ENCODE measurements at regions of chr15 and their contacts with region 1.

Region 1: DNA sequence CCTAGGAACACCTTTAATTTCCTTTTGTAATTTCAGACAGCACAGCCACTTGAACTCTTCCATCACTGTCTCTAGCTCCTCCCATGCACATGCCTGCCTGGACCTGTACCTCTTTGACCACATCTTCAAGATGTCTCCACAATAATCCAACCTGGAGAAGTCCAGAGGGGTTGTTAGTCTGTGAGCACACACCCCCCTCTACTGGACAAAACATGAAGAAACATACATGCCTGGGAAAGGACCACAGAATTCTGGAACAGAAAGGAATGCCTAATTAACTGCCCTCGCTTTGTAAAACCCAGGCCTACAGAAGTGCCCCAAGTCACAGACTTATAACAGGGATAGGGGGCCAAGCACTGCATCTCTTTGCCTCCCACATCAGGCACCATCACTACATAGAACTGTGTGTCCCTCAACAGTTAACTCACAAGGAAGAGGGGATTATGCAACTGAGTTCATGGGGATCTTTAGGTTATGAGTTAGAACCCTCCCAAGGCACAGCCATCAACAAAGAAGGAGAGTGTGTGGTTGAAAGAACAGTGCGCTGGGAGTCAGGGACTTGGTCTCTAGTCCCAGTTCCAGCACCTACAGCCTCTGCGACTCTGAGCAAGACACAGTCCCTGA is 61.7 kb downstream of the FMN1 start:
- DNase-seq: peak; percentile 61
- H3K4me3 ChIP-seq: no peak overlapping the region
- H3K27ac ChIP-seq: no peak overlapping the region
- H3K27me3 ChIP-seq: no peaks in the 10 kb centered on the region
- CTCF ChIP-seq: peak; percentile 89

Region 2: DNA sequence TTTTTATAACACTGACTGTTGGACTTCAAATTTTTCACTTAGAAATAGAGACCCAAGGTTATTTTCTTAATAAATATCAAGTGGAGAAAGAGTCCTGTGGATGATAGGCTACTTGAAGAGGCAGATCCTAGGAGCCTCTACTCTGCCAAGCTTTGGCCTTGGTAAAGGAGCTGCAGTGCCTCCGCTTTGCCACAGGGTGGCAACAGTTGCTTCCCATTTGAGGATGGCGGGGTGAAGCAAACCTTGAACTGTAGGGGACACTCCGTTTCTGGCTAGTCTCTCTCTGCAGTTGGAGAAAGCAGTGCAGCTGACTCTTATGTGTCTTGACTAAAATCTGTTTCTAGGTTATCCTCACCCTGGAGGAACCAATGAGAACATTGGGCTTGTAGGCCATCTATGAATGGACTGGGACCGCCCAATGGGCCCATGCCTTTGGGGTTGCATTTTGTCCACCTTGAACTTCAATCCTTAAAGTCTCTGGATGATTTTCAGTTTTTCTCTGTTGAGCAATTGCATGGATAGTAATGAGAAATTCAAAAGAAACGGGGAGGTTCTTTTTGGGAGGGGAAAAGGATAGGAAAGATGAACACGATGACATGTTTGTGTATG is 481.5 kb before region 1 on chr15:
- CTCF ChIA-PET with region 1: interaction called, 39 read pairs
- POLR2A ChIA-PET with region 1: no interaction called
- DNase-seq: peak; percentile 38
- H3K4me3 ChIP-seq: no peak overlapping the region
- H3K27ac ChIP-seq: no peak overlapping the region
- H3K27me3 ChIP-seq: no peaks in the 10 kb centered on the region
- CTCF ChIP-seq: peak; percentile 98

Region 3: GRCh38 chr15:32994810-32995424 is 137.9 kb before region 1 on chr15:
- CTCF ChIA-PET with region 1: interaction called, 25 read pairs
- POLR2A ChIA-PET with region 1: no interaction called
- DNase-seq: no peak
- H3K4me3 ChIP-seq: no peak overlapping the region
- H3K27ac ChIP-seq: no peak overlapping the region
- H3K27me3 ChIP-seq: no peaks in the 10 kb centered on the region
- CTCF ChIP-seq: peak; percentile 70

Region 4: DNA sequence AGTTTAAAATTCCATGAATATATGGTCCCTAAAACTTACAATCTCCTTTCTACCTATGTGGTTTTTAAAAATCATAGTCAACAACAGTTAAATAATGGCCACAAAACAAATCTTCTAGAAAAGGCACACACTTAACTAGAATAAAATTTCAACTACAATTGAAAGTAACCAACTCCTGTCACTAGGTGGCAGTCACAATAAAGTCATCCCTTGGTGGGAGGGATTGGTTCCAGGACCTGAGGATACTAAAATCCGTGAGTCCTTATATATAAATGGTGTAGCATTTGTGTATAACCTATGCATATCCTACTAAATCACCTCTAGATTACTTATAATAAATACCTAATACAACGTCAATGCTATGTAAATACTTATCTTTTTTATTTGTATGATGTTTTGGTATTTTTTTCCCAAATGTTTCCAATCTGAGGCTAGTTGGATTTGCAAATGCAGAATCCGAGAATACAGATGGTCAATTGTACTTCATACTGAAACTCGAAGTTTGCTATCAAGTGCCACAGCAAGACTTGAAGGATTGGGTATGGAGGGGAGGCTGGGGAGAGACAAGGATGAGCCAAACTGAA is 110.9 kb before region 1 on chr15:
- CTCF ChIA-PET with region 1: interaction called, 49 read pairs
- POLR2A ChIA-PET with region 1: no interaction called
- DNase-seq: peak; percentile 34
- H3K4me3 ChIP-seq: no peak overlapping the region
- H3K27ac ChIP-seq: peak overlapping the region; percentile 63
- H3K27me3 ChIP-seq: no peaks in the 10 kb centered on the region
- CTCF ChIP-seq: peak; percentile 66

Region 5: GRCh38 chr15:33080006-33080405 is 52.8 kb before region 1 on chr15:
- CTCF ChIA-PET with region 1: interaction called, 290 read pairs
- POLR2A ChIA-PET with region 1: no interaction called
- DNase-seq: no peak
- H3K4me3 ChIP-seq: no peak overlapping the region
- H3K27ac ChIP-seq: no peak overlapping the region
- H3K27me3 ChIP-seq: no peaks in the 10 kb centered on the region
- CTCF ChIP-seq: no peak

Region 6: DNA sequence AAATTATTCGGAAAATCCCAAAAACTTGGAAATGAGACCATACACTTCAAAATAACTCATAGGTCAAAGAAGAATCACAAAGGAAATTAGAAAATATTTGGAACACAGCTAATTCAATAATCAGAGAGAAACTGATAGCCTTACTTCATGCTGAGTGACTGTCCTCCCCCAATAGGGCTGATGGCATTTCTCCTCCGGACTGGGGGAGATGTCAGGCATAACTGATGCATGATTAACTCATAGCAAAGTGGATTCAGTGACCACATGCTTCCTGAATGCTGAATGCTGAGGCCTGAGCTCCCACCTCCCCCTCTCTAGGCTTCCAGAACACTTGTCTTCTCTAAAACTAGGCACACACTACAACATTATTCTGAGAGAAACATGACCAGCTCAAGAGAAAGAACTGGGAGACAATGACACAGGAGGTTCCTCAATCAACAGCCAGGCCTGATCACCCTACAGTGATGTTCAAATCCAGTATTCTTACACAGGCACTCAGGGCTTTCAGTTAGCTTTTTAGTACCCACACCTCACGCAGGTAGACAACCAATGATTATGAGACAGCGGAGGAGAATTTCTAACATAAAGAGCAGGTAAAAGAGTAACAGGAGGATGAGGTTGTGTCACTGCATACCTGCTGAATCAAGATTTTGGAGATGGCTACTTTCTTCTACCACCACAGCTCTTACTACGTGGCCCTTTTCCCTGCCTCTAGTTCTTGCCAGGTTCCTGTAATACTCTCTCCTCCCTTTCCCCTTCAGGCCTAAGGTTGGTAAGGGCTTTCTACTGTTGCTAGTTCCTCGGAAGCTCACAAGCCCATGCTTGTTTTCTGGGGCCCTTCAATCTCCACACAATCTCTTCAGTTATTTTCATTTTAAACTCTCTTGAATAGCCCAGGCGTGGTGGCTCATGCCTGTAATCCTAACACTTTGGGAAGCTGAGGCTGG is 34.5 kb before region 1 on chr15:
- CTCF ChIA-PET with region 1: interaction called, 290 read pairs
- POLR2A ChIA-PET with region 1: no interaction called
- DNase-seq: no peak
- H3K4me3 ChIP-seq: no peak overlapping the region
- H3K27ac ChIP-seq: peak overlapping the region; percentile 77
- H3K27me3 ChIP-seq: no peaks in the 10 kb centered on the region
- CTCF ChIP-seq: no peak

Region 7: DNA sequence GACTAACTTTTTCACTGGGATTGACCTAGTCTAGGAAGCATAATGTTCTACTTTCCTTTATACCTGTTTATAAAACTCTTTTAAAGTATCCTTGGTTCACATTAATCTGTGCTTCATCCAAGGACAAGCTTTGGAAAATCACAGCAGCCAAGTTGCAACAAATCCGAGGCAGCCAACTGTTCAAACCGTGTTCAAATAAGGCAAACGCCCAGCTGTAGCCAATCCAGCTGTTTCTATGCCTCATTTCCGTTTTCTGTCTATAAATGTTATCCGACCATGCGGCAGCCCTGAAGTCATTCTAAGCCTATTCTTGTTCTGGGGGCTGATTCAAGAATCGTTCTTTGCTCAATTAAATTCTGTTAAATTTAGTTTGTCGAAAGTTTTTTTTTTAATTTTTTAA is 16.6 kb before region 1 on chr15:
- CTCF ChIA-PET with region 1: interaction called, 14 read pairs
- POLR2A ChIA-PET with region 1: interaction called, 8 read pairs
- DNase-seq: no peak
- H3K4me3 ChIP-seq: no peak overlapping the region
- H3K27ac ChIP-seq: no peak overlapping the region
- H3K27me3 ChIP-seq: no peaks in the 10 kb centered on the region
- CTCF ChIP-seq: no peak

Measured in AG04450 (cell line).